ENCODE measurements at regions of chr17 and their contacts with region 1.

Region 1: DNA sequence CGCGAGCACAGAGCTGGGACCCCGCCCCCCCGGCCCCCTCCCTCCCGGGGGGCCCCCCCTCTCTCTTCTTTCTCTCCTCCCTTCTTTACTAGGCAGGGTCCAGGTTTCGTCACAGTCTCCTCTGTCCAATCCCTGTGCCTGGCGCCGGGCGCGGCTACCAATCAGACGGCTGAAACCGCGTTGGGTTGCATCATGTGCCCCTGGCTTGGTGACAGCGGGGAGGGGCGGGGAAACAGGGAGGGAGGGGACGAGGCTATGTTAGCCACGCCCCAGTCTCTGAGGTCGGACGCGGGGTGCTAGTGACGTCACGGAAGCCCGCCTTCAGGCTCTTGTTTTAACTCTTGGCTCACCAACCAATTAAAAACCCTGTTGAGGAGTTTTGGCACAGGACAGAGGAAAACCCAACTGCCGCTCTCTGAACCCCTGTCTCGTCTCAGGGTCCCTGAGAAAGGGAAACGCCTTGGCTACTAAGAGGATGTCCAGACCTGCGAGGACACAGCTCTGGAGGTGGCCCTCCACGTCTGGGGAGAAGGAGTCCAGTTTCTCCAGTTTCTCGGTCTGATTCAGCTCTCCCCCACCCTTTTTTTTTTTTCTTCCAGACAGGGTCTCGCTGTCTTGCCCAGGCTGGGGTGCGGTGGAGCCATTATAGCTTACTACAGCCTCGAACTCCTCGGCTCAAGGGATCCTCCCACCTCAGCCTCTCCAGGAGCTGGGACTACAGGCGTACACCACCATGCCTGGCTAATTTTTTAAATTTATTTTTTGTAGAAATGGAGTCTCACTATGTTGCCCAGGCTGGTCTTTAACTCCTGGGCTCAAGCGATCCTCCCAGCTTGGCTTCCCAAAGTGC is 439 bp upstream of the PLEKHH3 start:
- DNase-seq: peak; percentile 100
- ATAC-seq: peak; percentile 45 to 64
- H3K4me3 ChIP-seq: peak overlapping the region; percentile 87
- H3K27ac ChIP-seq: peak overlapping the region; percentile 95 to 98
- H3K4me1 ChIP-seq: peaks cover 56% of the 10 kb centered on the region
- CTCF ChIP-seq: no peak
- EP300 ChIP-seq: peak in 1 of 2 experiments; percentile 18; a peak in 1 of 5 replicates
- POLR2A ChIP-seq: no peak
- RAD21 ChIP-seq: no peak; a peak in 2 of 5 replicates

Region 2: GRCh38 chr17:42566883-42567573 is 110.2 kb before region 1 on chr17 and contains the start of gene MLX:
- CTCF ChIA-PET with region 1: interaction called, 21 read pairs
- POLR2A ChIA-PET with region 1: no interaction called
- DNase-seq: peak; percentile 94 to 100
- ATAC-seq: peak; percentile 52 to 74
- H3K4me3 ChIP-seq: peak within 1 kb of the TSS; percentile 93
- H3K27ac ChIP-seq: peak within 1 kb of the TSS; percentile 96
- H3K4me1 ChIP-seq: peaks cover 32% of the 10 kb centered on the region
- CTCF ChIP-seq: no peak
- EP300 ChIP-seq: no peak
- POLR2A ChIP-seq: peak; percentile 42
- RAD21 ChIP-seq: no peak; a peak in 1 of 5 replicates
- polyA plus RNA-seq, gene MLX: 48.0 and 48.6 TPM in 2 replicates

Region 3: DNA sequence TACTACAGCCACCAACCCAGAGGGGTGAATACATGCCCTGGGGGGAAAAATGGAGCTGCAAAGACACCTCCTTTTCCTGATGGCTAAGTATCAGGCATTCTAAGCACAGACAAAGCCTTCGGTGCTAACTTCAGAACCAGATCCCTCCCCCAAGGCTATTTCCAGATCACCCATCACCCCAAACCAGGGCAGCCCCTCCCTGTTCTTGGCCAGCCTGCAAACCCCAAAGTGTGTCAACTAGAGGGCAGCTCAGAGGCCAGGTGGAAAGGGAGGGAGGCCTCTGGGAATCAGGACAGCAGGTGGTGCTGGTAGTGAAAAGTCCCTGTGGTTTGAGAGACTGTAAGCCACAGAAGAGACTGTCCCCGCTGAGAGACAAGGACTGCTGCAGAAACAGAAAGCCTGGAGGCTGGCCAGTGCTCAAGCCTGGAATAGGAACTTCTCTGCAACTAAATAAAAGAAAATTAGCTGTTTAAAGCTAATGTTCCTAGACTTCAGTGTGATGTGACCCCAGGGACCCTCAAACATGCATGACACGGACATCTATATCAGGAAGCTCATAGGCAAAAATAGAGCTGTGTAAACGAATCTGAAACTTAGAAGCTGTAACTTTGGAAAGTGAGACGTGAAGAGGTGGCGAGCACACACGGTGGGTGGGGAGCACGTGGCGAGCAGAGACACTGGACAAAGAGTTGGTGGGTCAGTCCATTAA is 58.6 kb before region 1 on chr17:
- CTCF ChIA-PET with region 1: interaction called, 75 read pairs
- POLR2A ChIA-PET with region 1: interaction called, 21 read pairs
- DNase-seq: peak; percentile 58 to 65
- ATAC-seq: peak; percentile 83 to 85
- H3K4me3 ChIP-seq: no peak overlapping the region
- H3K27ac ChIP-seq: no peak overlapping the region
- H3K4me1 ChIP-seq: peaks cover 16% of the 10 kb centered on the region
- CTCF ChIP-seq: peak; percentile 41
- EP300 ChIP-seq: no peak
- POLR2A ChIP-seq: no peak
- RAD21 ChIP-seq: peak; percentile 54 to 64

Region 4: DNA sequence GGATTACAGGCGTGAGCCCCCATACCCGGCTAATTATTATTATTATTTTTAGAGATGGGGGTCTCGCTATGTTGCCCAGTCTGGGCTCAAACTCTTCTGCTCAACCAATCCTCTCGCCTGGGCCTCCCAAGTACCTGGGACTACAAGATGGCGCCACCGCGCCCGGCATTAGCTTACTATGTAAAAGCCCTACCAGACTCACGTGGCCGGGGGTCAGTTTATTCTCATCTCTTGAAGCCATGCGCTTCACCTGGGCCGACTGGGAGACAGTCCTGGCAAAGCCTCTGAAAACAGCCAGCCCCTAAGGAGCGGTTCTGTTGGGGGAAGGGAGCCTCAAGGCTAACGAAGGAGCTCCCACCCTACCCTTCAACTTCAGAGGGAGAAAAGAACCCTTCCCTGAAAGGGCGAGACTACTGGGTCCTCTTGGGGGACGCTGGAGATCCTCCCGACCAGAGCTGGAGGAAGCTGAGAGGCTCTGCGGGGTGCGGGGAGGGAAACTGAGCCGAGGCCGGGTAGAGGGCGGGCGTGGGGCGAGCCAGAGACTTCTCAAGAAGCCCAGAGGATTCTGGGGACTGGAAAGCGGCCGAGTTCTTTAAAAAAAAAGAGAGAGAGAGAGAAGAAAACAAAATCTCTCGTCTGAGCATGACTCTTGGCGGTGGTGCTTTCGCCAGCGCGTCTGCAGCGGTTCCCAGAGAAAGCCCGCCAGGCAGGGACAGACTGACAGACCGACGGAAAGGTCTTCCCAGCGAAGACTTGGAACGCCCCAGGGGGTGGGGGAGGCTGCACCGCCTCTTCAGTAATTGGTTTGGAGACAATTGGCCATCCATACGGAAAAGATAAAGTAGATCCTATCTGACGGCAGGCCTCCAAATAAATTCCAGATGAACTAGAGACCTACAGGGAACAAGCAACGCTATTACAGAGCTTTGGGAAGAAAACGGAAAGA is 23.8 kb before region 1 on chr17:
- CTCF ChIA-PET with region 1: interaction called, 44 read pairs
- POLR2A ChIA-PET with region 1: interaction called, 6 read pairs
- DNase-seq: no peak
- ATAC-seq: no peak
- H3K4me3 ChIP-seq: no peak overlapping the region
- H3K27ac ChIP-seq: no peak overlapping the region
- H3K4me1 ChIP-seq: no peaks in the 10 kb centered on the region
- CTCF ChIP-seq: no peak
- EP300 ChIP-seq: no peak
- POLR2A ChIP-seq: no peak
- RAD21 ChIP-seq: no peak

Region 5: DNA sequence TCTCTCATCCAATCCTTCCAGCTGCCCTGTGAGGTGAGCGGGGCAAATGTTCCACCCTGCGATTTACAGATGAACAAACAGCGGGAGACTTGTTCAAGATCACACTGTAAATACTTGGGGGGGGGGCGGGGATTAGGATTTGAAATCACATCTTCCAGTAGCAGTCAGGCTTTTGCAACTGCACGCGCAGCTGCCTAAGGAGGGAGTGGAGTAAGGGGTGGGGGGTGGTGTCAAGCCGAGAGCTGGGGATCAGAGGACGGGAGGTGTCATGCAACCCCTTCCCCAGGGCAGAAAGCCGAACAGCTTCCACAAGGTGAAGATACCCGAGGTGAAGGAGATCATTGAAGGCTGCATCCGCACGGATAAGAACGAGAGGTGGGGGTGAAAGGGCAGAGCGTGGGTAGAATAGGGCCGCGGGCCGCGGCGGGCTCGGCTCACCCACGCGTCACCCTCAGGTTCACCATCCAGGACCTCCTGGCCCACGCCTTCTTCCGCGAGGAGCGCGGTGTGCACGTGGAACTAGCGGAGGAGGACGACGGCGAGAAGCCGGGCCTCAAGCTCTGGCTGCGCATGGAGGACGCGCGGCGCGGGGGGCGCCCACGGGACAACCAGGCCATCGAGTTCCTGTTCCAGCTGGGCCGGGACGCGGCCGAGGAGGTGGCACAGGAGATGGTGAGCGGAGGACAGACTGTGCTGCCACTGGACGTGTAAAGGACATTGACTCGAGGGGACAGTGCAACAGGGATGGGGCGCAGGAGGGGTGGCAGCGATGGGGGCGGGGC is 107.8 kb after region 1 on chr17:
- CTCF ChIA-PET with region 1: no interaction called
- POLR2A ChIA-PET with region 1: no interaction called
- DNase-seq: no peak
- ATAC-seq: no peak
- H3K4me3 ChIP-seq: no peak overlapping the region
- H3K27ac ChIP-seq: no peak overlapping the region
- H3K4me1 ChIP-seq: peaks cover 25% of the 10 kb centered on the region
- CTCF ChIP-seq: no peak
- EP300 ChIP-seq: no peak
- POLR2A ChIP-seq: no peak
- RAD21 ChIP-seq: no peak

Region 6: GRCh38 chr17:42819944-42820535 is 142.8 kb after region 1 on chr17:
- CTCF ChIA-PET with region 1: interaction called, 10 read pairs
- POLR2A ChIA-PET with region 1: interaction called, 3 read pairs
- DNase-seq: peak; percentile 84 to 85
- ATAC-seq: peak; percentile 44 to 66; a peak in 3 of 6 replicates
- H3K4me3 ChIP-seq: no peak overlapping the region
- H3K27ac ChIP-seq: no peak overlapping the region
- H3K4me1 ChIP-seq: peaks cover 21% of the 10 kb centered on the region
- CTCF ChIP-seq: peak; percentile 82
- EP300 ChIP-seq: no peak
- POLR2A ChIP-seq: no peak
- RAD21 ChIP-seq: peak; percentile 26 to 40; a peak in 2 of 5 replicates